PC-9 (cell line): ENCODE measurements at regions of chr11 and their contacts with region 1.

Region 1: GRCh38 chr11:112206071-112206470 is 20.2 kb upstream of the PTS start:
- DNase-seq: no peak
- H3K4me3 ChIP-seq: no peak overlapping the region
- H3K27ac ChIP-seq: no peak overlapping the region
- H3K4me1 ChIP-seq: no peaks in the 10 kb centered on the region
- H3K27me3 ChIP-seq: no peaks in the 10 kb centered on the region
- CTCF ChIP-seq: no peak

Region 2: GRCh38 chr11:112086422-112087191 is 119.5 kb before region 1 on chr11 and contains the starts of genes SDHD and TIMM8B:
- CTCF ChIA-PET with region 1: no interaction called
- POLR2A ChIA-PET with region 1: no interaction called
- intact Hi-C with region 1: no loop called
- DNase-seq: peak; percentile 93 to 95
- H3K4me3 ChIP-seq: peak within 1 kb of the TSS; percentile 96
- H3K27ac ChIP-seq: peak within 1 kb of the TSS; percentile 26
- H3K4me1 ChIP-seq: peaks cover 21% of the 10 kb centered on the region
- H3K27me3 ChIP-seq: no peaks in the 10 kb centered on the region
- CTCF ChIP-seq: no peak
- total RNA-seq, gene SDHD: 99.5 and 122 TPM in 2 replicates
- total RNA-seq, gene TIMM8B: 42.4 and 44.3 TPM in 2 replicates

Region 3: GRCh38 chr11:112128483-112129121 is 77.5 kb before region 1 on chr11:
- CTCF ChIA-PET with region 1: no interaction called
- POLR2A ChIA-PET with region 1: interaction called, 24 read pairs
- intact Hi-C with region 1: no loop called
- DNase-seq: peak; percentile 81 to 91
- H3K4me3 ChIP-seq: no peak overlapping the region
- H3K27ac ChIP-seq: peak overlapping the region; percentile 25; the same call in 1 of the 2 replicates
- H3K4me1 ChIP-seq: peaks cover 24% of the 10 kb centered on the region
- H3K27me3 ChIP-seq: no peaks in the 10 kb centered on the region
- CTCF ChIP-seq: no peak